Transverse colon (tissue), 4 donors: ENCODE measurements at regions of chr9 and their contacts with region 1.

Region 1: DNA sequence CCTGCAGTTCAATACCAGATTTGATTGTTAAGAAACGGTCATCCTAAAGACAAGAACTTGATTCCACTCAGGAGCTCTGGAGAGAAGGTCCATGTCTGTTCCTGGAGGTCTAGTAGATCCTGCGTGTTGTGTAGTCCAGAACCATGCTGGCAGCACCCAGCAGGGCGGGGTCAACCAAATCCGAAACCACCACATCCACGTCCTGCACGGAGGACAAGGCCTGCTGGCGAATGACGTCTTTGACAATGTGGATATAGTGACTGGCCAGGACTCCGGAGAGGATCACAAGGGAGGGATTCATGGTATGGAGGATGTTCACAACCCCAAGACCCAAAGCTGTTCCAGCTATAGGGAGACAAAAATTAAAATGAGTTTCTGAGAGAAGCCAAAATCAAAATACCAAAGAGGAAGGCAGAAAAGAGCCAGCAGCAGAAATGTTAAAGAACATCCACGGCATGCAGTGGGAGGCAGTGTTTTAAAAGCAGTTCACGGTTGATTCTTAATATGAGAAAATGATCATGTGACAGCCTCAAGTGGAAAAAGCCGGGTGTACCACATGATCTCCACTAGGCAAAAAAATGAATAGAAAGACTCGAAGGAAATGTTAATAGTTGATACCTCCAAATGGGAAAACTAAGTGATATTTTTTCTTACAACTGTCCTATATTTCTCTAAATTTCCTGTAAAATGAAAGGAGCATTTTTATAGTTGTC is 26.7 kb downstream of the CLTA start:
- DNase-seq: no peak
- H3K4me3 ChIP-seq: no peak overlapping the region
- H3K27ac ChIP-seq: no peak overlapping the region
- H3K4me1 ChIP-seq: peaks cover 0 to 9% (median 0%) of the 10 kb centered on the region in 4 donors
- H3K27me3 ChIP-seq: no peaks in the 10 kb centered on the region
- CTCF ChIP-seq: no peak
- EP300 ChIP-seq: no peak
- POLR2A ChIP-seq: no peak

Region 2: DNA sequence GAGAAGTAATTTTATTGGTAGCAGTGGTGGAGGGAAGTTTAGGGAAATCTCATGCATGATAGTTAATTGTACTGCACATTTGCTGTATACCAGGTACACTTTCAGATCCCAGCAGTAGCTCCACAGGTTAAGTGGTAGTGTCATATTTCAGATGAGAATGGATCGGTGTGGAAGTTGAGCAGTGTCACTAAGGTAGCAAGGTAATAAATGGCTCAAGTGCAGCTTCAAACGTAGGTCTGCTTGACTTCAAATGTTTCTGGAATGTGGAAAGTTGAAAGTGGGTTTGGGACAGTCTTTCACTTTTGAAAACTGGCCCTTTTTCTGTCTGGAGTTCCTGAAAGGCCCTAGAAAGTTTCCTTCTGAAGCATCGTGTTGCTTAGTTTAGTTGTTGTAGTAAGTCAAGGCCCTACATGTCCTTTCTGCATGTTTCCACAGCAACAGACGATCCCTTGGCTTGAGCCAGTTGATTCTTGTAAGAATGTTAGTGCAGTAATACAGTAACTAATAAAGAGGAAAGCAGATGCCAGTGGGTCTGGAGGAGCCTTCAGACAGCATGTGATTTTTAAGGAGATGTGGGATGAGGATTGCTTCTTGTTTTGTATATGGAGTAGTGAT is 22.9 kb before region 1 on chr9:
- in situ Hi-C with region 1: no loop called
- intact Hi-C with region 1: loop called (anchors 1 kb)
- DNase-seq: no peak
- H3K4me3 ChIP-seq: no peak overlapping the region
- H3K27ac ChIP-seq: no peak overlapping the region
- H3K4me1 ChIP-seq: peaks cover 25 to 43% (median 31%) of the 10 kb centered on the region in 4 donors
- H3K27me3 ChIP-seq: no peaks in the 10 kb centered on the region
- CTCF ChIP-seq: no peak
- EP300 ChIP-seq: no peak
- POLR2A ChIP-seq: no peak

Region 3: DNA sequence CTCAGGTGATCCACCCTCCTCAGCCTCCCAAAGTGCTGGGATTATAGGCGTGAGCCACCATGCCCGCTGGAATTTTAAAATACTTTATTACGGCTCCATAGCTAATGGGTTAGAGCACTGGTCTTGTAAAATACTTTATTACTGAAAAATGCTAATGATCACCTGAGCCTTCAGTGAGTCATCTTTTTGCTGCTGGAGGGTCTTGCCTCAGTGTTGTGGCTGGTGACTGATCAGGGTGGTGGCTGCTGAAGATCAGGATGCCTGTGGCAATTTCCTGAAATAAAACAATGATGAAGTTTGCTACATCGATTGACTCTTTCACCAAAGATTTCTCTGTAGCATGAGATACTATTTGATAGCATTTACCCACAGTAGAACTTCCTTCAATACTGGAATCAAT is 66.8 kb after region 1 on chr9:
- in situ Hi-C with region 1: no loop called
- intact Hi-C with region 1: no loop called
- DNase-seq: no peak
- H3K4me3 ChIP-seq: no peak overlapping the region
- H3K27ac ChIP-seq: no peak overlapping the region
- H3K4me1 ChIP-seq: no peaks in the 10 kb centered on the region
- H3K27me3 ChIP-seq: no peaks in the 10 kb centered on the region
- CTCF ChIP-seq: no peak
- EP300 ChIP-seq: no peak
- POLR2A ChIP-seq: no peak